ENCODE measurements at regions of chr10 and their contacts with region 1.

Region 1: GRCh38 chr10:28326516-28327490 is 23.9 kb upstream of the MPP7 start:
- DNase-seq: no peak
- ATAC-seq: peak; percentile 23
- H3K4me3 Mint-ChIP-seq: peak overlapping the region; percentile 39
- H3K27ac Mint-ChIP-seq: peak overlapping the region; percentile 67
- H3K4me1 Mint-ChIP-seq: peaks cover 27% of the 10 kb centered on the region
- H3K27me3 Mint-ChIP-seq: no peaks in the 10 kb centered on the region

Region 2: GRCh38 chr10:28077889-28078288 is 248.9 kb before region 1 on chr10:
- POLR2A ChIA-PET with region 1: interaction called, 10 read pairs
- DNase-seq: no peak
- ATAC-seq: no peak
- H3K4me3 Mint-ChIP-seq: no peak overlapping the region
- H3K27ac Mint-ChIP-seq: no peak overlapping the region
- H3K4me1 Mint-ChIP-seq: no peaks in the 10 kb centered on the region
- H3K27me3 Mint-ChIP-seq: no peaks in the 10 kb centered on the region

Measured in activated naive CD8-positive, alpha-beta T cell treated with anti-CD3 and anti-CD28 coated beads, Interleukin-2, amount 10 ng/mL, durations not matched to agents 7 days and 5 days (primary cell).